ENCODE measurements at regions of chr11 and their contacts with region 1.

Region 1: GRCh38 chr11:44277196-44278090 is 32.5 kb downstream of the ALX4 start:
- DNase-seq: no peak
- H3K4me3 ChIP-seq: no peak overlapping the region
- H3K27ac ChIP-seq: no peak overlapping the region
- H3K4me1 ChIP-seq: no peaks in the 10 kb centered on the region
- H3K27me3 ChIP-seq: no peaks in the 10 kb centered on the region
- CTCF ChIP-seq: no peak

Region 2: GRCh38 chr11:44344921-44345320 is 67.5 kb after region 1 on chr11:
- CTCF ChIA-PET with region 1: no interaction called
- dilution Hi-C with region 1: loop called (anchors 5 kb)
- in situ Hi-C with region 1: no loop called
- intact Hi-C with region 1: no loop called
- DNase-seq: no peak
- H3K4me3 ChIP-seq: no peak overlapping the region
- H3K27ac ChIP-seq: no peak overlapping the region
- H3K4me1 ChIP-seq: no peaks in the 10 kb centered on the region
- H3K27me3 ChIP-seq: peaks cover 5% of the 10 kb centered on the region
- CTCF ChIP-seq: no peak

Measured in mammary epithelial cell (primary cell).